ENCODE measurements at regions of chr1 and their contacts with region 1.

Region 1: DNA sequence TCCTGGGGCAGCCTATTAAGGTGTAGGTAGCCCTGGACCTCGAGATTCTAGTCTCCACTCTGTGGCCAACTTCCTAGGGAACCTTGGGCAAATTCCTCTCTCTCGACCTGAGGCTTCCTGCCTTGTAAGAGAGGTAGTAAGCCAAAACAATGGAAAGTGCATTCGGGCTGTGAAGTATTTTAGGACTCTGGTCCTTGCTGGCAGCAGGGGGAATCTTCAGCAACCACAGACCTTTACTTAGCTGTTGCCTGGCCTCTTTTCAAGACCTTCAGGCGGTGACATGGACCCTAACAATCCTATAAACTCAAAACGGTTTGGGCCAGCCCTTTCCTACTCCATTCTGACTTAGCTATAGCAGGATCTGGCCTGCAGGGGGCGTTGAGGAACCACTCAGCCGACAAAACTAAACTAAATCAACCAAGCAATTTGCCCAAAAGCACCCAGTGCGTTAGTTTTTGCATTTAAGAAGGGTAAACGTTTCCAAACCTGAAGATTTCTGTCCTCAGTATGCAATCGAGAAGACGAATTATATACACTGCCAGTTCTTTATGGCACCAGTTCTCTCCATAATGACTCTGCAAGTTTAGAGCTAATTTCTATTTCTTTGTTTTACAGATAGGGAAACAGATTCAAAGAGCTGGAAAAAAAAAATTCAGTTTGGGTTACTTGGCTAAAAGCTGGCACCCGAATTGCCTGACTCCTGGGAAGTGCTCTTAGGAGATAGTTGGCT is 10.9 kb upstream of the SESN2 start:
- DNase-seq: peak; percentile 58 to 72
- ATAC-seq: peak; percentile 63 to 75
- H3K4me3 ChIP-seq: peak overlapping the region; percentile 29; the same call in 1 of the 3 replicates
- H3K27ac ChIP-seq: peak overlapping the region; percentile 74 to 85
- H3K4me1 ChIP-seq: peaks cover 45% of the 10 kb centered on the region
- CTCF ChIP-seq: peak; percentile 78
- EP300 ChIP-seq: no peak
- POLR2A ChIP-seq: no peak
- RAD21 ChIP-seq: peak; percentile 85 to 86

Region 2: DNA sequence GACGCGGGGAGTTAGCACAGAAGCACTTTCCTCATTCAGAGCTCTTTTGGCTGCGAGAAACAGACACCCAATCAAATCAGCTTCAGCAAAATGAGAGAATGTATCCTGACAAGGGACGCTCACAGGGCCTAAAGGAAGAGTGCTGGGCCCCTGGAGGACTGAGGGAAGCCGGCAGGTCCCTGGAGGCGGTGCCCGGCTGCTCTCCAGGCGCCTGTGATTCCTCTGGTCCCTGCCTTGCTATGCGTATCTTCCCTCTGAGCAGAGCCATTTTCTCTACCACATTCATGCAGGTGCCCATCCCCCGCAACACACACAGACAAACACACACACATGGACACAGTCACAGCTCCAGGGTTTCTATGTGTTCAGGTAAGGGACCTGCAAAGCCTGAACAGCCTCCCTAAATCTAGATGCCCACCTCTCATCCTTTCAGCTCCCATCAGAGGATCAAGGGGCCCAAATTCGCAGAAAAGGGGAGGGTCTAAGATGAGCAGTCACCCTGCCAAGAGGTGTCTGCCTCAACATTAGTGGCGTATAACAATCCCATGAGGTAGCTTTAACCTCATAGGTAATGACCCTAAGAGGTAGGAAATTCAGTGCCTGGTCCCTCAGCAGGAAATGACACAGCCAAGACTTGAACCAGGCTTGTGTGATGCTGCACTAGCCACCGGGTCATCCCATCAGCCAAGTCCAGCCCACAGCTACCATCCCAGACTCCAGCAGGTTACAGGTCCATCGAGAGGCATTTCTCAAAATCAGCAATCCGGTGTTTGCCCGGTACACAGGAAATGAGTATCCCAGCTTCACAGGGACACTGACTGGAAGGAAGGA is 101.0 kb before region 1 on chr1:
- CTCF ChIA-PET with region 1: no interaction called
- POLR2A ChIA-PET with region 1: no interaction called
- DNase-seq: no peak
- ATAC-seq: no peak; a peak in 1 of 6 replicates
- H3K4me3 ChIP-seq: no peak overlapping the region
- H3K27ac ChIP-seq: 0 out of 6 replicates have a peak overlapping the region, but pooled peaks of 1 of the 2 experiments have one; percentile 9
- H3K4me1 ChIP-seq: peaks cover 14% of the 10 kb centered on the region
- CTCF ChIP-seq: no peak
- EP300 ChIP-seq: no peak
- POLR2A ChIP-seq: no peak
- RAD21 ChIP-seq: no peak

Region 3: DNA sequence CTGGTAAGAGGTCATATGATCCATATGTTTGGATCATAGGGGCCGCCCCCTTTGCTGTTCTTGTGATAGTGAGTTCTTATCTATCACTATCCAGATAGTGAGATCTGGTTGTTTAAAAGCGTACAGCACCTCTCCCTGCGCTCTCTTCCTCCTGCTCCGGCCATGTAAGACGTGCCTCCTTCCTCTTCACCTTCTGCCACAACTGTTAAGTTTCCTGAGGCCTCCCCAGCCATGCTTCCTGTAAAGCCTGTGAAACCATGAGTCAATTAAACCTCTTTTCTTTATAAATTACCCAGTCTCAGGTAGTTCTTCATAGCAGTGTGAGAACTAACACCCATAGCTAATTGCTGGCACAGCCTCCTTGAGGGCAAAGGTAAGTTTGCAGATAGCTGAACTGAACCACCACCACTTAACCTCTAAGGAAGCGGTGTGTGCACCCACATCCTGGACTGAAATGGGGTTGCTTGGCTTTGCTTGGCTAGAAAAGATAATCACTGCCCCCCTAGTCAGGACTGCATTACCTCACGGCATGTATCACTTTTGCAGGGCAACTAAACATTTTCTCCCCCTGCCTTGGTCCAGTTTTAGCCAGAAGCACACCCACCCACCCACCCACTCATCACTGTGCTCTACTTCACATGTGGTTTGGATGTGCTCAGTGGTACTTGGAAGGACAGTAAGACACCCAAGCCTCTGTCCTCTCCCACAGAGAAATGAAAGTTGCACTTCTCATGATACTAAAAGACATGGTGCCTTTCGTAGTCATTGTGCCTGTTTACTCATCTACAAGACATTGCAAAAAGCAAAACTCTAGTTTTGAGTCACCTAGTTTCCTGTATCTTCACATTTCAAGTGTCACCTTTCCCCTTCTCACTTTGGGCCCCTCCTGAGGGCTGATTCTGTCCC is 48.9 kb before region 1 on chr1:
- CTCF ChIA-PET with region 1: no interaction called
- POLR2A ChIA-PET with region 1: no interaction called
- DNase-seq: no peak
- ATAC-seq: no peak
- H3K4me3 ChIP-seq: no peak overlapping the region
- H3K27ac ChIP-seq: no peak overlapping the region
- H3K4me1 ChIP-seq: no peaks in the 10 kb centered on the region
- CTCF ChIP-seq: no peak
- EP300 ChIP-seq: no peak
- POLR2A ChIP-seq: no peak
- RAD21 ChIP-seq: no peak

Region 4: DNA sequence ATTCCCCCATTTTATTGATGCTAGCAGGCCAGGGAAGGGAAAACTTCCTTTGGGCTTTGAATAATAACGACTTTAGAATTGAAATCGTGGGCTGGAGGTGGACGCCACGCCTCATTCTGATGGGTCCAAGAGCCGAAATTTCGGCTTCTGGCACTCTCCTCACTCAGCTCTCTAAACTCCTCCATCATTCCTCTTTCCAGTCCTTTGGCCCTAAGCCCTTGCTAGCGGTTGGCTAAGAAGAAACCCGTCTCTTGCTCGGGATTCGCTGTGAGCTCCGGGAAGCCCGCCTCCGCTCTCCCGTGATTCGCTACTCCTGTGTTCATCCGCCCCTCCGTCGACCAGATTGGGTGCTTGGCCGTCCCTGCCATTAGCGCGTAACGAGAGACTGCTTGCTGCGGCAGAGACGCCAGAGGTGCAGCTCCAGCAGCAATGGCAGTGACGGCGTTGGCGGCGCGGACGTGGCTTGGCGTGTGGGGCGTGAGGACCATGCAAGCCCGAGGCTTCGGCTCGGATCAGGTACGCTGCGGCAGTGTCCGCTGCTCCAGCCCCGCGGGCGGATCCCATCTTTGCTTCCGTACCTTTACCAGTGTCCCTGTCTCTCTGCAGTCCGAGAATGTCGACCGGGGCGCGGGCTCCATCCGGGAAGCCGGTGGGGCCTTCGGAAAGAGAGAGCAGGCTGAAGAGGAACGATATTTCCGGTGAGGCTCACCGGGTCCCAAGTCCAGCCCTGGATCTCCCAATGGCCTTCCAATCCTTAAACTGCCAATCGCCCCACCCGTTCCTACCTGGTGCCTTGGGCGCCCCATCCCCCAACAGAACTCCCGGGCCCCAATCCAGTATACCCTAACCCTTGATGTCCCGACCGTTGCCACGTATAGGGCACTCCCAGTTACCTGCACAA is 12.4 kb before region 1 on chr1 and contains the start of gene ATP5IF1:
- CTCF ChIA-PET with region 1: interaction called, 15 read pairs
- POLR2A ChIA-PET with region 1: interaction called, 7 read pairs
- DNase-seq: peak; percentile 95 to 98
- ATAC-seq: peak; percentile 98
- H3K4me3 ChIP-seq: peak within 1 kb of the TSS; percentile 84
- H3K27ac ChIP-seq: peak within 1 kb of the TSS; percentile 87 to 92
- H3K4me1 ChIP-seq: peaks cover 16% of the 10 kb centered on the region
- CTCF ChIP-seq: no peak
- EP300 ChIP-seq: no peak
- POLR2A ChIP-seq: peak; percentile 93
- RAD21 ChIP-seq: no peak
- polyA plus RNA-seq, gene ATP5IF1: 102 and 178 TPM in 2 replicates

Region 5: DNA sequence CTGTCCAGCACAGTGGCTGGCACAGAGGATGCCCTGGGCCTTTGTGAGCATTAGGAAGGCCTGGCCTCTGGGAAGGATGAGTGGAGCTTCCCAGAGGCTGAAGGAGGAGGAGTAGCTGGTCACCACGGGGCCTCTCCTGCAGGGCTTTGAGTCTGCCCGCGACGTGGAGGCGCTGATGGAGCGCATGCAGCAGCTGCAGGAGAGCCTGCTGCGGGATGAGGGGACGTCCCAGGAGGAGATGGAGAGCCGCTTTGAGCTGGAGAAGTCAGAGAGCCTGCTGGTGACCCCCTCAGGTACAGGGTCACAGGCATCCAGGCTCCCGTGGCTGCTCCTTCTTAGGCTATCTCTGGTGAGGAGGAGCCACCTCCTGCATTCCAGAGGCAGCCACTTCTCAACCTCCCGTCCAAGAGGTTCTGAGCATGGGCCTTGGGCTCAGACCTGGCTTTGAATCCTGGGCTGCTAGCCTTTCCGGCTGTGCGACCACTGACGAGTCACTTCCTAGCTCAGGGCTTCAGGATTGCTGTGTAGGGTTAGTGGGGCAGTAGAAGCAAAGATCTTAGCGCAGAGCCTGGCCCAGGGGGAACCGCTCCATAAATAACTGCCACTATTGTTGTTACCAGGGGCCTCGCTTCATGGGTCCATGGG is 24.9 kb after region 1 on chr1:
- CTCF ChIA-PET with region 1: interaction called, 12 read pairs
- POLR2A ChIA-PET with region 1: interaction called, 3 read pairs
- DNase-seq: no peak
- ATAC-seq: peak in 1 of 2 experiments; percentile 24; a peak in 1 of 6 replicates
- H3K4me3 ChIP-seq: no peak overlapping the region
- H3K27ac ChIP-seq: no peak overlapping the region
- H3K4me1 ChIP-seq: peaks cover 6% of the 10 kb centered on the region; the same call in 1 of the 3 replicates
- CTCF ChIP-seq: no peak
- EP300 ChIP-seq: no peak
- POLR2A ChIP-seq: no peak
- RAD21 ChIP-seq: no peak

Region 6: DNA sequence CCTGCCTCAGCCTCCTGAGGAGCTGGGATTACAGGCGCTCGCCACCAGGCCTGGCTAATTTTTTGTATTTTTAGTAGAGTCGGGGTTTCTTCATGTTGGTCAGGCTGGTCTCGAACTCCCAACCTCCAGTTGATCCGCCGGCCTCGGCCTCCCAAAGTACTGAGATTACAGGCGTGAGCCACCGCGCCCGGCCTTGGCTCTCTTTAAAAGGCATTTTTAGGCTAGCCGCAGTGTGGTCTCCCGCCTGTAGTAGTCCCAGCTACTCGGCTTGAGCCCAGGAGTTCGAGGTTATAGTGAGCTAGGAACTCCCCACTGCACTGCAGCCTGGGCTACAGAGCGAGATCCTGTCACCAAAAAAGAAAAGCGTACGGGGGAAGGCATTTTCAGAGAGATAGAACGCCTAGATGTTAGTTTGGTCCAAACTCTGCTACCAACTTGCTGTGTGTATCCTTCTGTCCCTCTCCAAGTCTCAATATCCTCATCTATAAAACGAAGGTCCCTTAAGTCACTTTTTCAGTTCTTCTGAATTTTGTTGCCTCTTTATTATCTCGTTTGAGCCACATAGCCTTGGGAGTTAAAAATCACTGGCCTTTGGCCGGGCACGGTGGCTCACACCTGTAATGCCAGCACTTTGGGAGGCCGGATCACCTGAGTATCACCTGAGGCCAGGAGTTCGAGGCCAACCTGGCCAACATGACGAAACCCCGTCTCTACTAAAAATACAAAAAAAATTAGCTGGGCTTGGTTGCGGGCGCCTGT is 81.1 kb after region 1 on chr1:
- CTCF ChIA-PET with region 1: interaction called, 20 read pairs
- POLR2A ChIA-PET with region 1: interaction called, 13 read pairs
- DNase-seq: peak in 1 of 2 experiments; percentile 30
- ATAC-seq: peak; percentile 55 to 73; a peak in 3 of 6 replicates
- H3K4me3 ChIP-seq: peak overlapping the region; percentile 81
- H3K27ac ChIP-seq: peak overlapping the region; percentile 94 to 95
- H3K4me1 ChIP-seq: peaks cover 18% of the 10 kb centered on the region; the same call in 2 of the 3 replicates
- CTCF ChIP-seq: no peak
- EP300 ChIP-seq: no peak
- POLR2A ChIP-seq: no peak
- RAD21 ChIP-seq: no peak

Region 7: DNA sequence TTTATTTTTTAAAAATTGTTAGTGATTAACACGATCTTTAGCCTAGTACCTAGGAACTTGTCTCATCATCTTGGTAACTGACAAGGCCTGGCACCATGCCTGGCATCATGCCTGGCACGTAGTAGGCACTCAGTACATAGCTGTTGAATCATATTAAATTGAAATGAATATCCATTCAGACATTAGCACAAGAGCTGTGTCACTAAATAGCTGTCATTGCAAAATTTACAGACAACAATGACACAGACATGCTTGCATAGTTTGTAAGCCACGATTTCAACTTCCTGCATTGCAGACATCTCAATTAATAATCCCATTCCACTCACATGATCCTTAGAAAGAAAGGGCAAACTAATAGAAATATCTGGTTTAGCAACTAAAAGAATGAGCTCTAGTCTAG is 105.7 kb after region 1 on chr1:
- CTCF ChIA-PET with region 1: interaction called, 47 read pairs
- POLR2A ChIA-PET with region 1: interaction called, 3 read pairs
- DNase-seq: peak in 1 of 2 experiments; percentile 37
- ATAC-seq: peak; percentile 27 to 63; a peak in 3 of 6 replicates
- H3K4me3 ChIP-seq: no peak overlapping the region
- H3K27ac ChIP-seq: peak overlapping the region; percentile 70 to 89
- H3K4me1 ChIP-seq: peaks cover 27% of the 10 kb centered on the region
- CTCF ChIP-seq: no peak
- EP300 ChIP-seq: no peak
- POLR2A ChIP-seq: no peak
- RAD21 ChIP-seq: no peak

Region 8: GRCh38 chr1:28369371-28370238 is 121.2 kb after region 1 on chr1 and contains the start of gene PHACTR4:
- CTCF ChIA-PET with region 1: interaction called, 41 read pairs
- POLR2A ChIA-PET with region 1: interaction called, 6 read pairs
- DNase-seq: peak; percentile 87 to 95
- ATAC-seq: peak; percentile 94 to 98
- H3K4me3 ChIP-seq: peak within 1 kb of the TSS; percentile 72
- H3K27ac ChIP-seq: peak within 1 kb of the TSS; percentile 96
- H3K4me1 ChIP-seq: peaks cover 39% of the 10 kb centered on the region
- CTCF ChIP-seq: no peak
- EP300 ChIP-seq: no peak
- POLR2A ChIP-seq: peak; percentile 74
- RAD21 ChIP-seq: no peak
- polyA plus RNA-seq, gene PHACTR4: 17.4 and 32.1 TPM in 2 replicates

Measured in A549 (cell line).